ENCODE measurements at regions of chr19 and their contacts with region 1.

Region 1: DNA sequence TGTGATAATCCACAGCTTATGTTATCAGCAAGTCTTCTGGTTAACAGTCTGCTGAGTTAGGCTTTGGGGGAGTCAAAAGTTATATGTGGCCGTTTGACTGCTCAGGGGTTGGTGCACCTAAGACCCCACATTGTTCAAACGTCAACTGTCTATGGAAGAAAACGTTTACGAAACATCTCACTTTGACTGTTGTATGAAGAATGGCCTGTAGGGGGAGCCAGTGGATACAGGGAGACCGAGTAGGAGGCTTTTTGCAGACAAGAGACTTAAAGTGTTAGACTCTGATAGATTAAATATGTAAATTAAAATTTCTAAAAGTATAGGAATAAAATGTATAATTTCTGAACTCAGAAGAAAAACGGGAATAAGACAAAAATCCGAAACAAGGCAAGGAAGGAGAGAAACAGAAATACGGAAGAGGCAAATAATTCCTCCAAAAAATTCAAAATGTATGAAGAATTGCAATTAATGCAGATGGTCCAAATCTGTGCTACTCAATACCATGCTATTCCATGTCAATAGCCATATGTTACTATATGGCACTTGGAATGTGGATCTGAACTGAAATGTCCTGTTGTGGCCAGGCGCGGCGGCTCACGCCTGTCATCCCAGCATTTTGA is 37.8 kb downstream of the TNFSF14 start:
- DNase-seq: peak; percentile 84
- ATAC-seq: peak; percentile 82
- H3K4me3 ChIP-seq: no peak overlapping the region
- H3K27ac ChIP-seq: peak overlapping the region; percentile 53
- H3K4me1 ChIP-seq: peaks cover 12% of the 10 kb centered on the region
- H3K27me3 ChIP-seq: no peaks in the 10 kb centered on the region
- CTCF ChIP-seq: peak; percentile 77 to 85 (median 80)
- EP300 ChIP-seq: no peak
- POLR2A ChIP-seq: no peak
- RAD21 ChIP-seq: peak; percentile 86

Region 2: GRCh38 chr19:6481541-6482342 is 150.4 kb before region 1 on chr19 and contains the start of gene DENND1C:
- CTCF ChIA-PET with region 1: interaction called, 10 read pairs
- POLR2A ChIA-PET with region 1: no interaction called
- RAD21 ChIA-PET with region 1: interaction called, 3 read pairs
- SMC1A ChIA-PET with region 1: interaction called, 3 read pairs
- in situ Hi-C with region 1: no loop called
- intact Hi-C with region 1: no loop called
- DNase-seq: peak; percentile 45
- ATAC-seq: peak; percentile 95
- H3K4me3 ChIP-seq: peak within 1 kb of the TSS; percentile 69
- H3K27ac ChIP-seq: peak within 1 kb of the TSS; percentile 93
- H3K4me1 ChIP-seq: peaks cover 10% of the 10 kb centered on the region
- H3K27me3 ChIP-seq: no peaks in the 10 kb centered on the region
- CTCF ChIP-seq: peak; percentile 51 to 64 (median 61); a peak in 4 of 6 replicates
- EP300 ChIP-seq: no peak
- POLR2A ChIP-seq: peak; percentile 82
- RAD21 ChIP-seq: peak; percentile 53
- polyA plus RNA-seq, gene DENND1C: 2.4 to 2.8 TPM

Region 3: DNA sequence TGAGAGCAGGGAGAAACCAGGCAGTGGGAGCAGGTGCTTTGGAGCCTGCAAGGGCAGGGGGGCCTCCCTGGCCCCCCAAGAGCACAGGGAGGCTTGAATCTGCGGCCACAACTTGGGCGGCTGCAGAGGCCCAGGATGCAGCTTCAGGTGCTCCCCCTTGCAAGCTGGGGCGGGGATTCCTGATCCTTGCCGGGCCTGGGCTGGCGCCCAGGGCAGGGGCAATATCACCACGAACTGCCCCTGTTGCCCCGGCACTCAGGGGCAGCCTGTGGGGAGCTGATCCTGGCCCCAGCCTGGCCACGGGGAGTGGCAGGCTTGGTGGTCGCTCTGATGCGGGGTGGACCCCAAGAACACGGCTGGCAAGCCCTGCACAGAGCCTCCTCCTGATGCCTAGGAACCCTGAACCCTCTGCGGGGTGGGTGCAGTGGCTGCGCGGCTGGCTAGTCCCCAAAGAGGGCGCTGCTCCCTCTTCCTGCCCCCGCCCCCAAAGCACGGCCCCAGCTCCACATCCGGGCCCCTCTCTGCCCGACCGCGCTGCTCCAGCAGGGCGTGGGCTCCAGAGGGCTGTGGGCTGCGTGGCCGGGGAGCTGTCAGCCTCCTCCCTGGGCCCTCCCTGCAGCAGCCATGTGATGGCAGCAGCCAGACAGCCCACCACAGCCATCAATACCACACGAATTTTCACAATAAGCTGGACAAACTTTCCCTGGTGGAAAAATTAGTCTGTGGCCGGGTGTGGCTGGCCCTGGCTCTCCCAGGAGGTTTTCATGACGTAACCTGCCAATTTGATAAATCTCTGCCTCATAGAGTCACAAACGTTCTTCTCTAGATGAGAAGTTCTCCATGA is 80.3 kb before region 1 on chr19:
- CTCF ChIA-PET with region 1: interaction called, 11 read pairs
- POLR2A ChIA-PET with region 1: interaction called, 3 read pairs
- RAD21 ChIA-PET with region 1: interaction called, 4 read pairs
- SMC1A ChIA-PET with region 1: interaction called, 14 read pairs
- in situ Hi-C with region 1: no loop called
- intact Hi-C with region 1: no loop called
- DNase-seq: no peak
- ATAC-seq: peak; percentile 91
- H3K4me3 ChIP-seq: no peak overlapping the region; the same call in 1 of the 2 replicates
- H3K27ac ChIP-seq: peak overlapping the region; percentile 72
- H3K4me1 ChIP-seq: peaks cover 35% of the 10 kb centered on the region
- H3K27me3 ChIP-seq: no peaks in the 10 kb centered on the region
- CTCF ChIP-seq: peak; percentile 23 to 60 (median 47)
- EP300 ChIP-seq: peak; percentile 25 to 36; a peak in 1 of 4 replicates
- POLR2A ChIP-seq: peak; percentile 63
- RAD21 ChIP-seq: peak; percentile 40

Region 4: DNA sequence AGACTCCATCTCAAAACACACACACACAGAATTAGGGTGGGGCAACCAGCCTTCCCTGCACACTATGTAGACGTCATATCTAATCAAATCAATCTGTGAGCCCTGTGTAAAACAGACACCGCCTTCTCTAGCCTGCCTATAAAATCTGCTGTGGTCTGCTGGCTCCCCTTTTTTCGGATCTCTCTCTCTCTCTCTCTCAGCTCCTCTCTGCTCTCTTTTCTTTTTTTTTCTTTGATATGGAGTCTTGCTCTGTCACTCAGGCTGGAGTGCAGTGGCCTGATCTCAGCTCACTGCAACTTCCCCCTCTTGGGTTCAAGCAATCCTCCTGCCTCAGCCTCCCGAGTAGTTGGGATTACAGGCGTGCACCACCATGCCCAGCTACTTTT is 29.4 kb before region 1 on chr19:
- CTCF ChIA-PET with region 1: interaction called, 8 read pairs
- POLR2A ChIA-PET with region 1: interaction called, 4 read pairs
- RAD21 ChIA-PET with region 1: interaction called, 25 read pairs
- SMC1A ChIA-PET with region 1: interaction called, 20 read pairs
- in situ Hi-C with region 1: no loop called
- intact Hi-C with region 1: loop called (anchors 1 kb)
- DNase-seq: no peak
- ATAC-seq: peak; percentile 14
- H3K4me3 ChIP-seq: peak overlapping the region; percentile 76; the same call in 1 of the 2 replicates
- H3K27ac ChIP-seq: peak overlapping the region; percentile 95
- H3K4me1 ChIP-seq: peaks cover 27% of the 10 kb centered on the region
- H3K27me3 ChIP-seq: no peaks in the 10 kb centered on the region
- CTCF ChIP-seq: no peak
- EP300 ChIP-seq: no peak
- POLR2A ChIP-seq: no peak
- RAD21 ChIP-seq: no peak

Region 5: DNA sequence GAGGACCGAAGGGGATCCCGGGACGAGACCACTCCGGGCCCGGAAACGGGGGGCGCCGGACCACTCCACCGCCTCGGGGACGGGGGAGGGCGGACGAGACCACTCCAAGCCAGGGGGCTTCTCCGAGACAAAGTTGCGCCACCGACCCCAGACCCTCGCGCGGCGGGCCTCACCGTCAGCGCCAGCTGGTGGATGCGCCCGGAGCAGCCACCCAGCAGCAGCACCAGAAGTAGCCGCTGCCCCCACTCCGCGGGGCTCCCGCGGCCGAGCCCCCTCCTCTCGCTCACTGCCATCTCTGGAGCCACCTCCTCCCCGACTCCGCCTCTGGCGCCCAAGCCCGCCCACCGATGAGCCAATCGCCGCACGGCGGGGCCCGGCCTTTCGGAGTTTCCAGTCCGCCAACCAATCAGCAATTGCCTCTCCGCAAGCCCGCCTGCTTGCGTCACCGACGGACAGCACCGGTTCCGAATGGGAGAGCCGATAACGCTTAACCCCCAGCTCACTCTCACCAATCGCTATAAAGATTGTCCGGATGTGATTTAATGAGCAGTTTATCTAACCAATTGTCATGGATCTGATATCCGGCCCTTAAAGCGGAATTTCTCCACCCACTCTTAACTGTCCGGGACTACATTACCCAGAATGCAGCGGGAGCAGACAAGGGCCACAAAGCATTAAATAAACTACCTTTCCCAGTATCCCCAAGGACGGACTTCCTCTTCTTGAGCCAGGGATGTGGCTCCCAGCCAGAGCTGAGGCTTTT is 105.4 kb after region 1 on chr19 and contains the start of gene GPR108:
- CTCF ChIA-PET with region 1: interaction called, 46 read pairs
- POLR2A ChIA-PET with region 1: interaction called, 3 read pairs
- RAD21 ChIA-PET with region 1: interaction called, 43 read pairs
- SMC1A ChIA-PET with region 1: interaction called, 25 read pairs
- in situ Hi-C with region 1: no loop called
- intact Hi-C with region 1: loop called (anchors 1 kb)
- DNase-seq: peak; percentile 100
- ATAC-seq: peak; percentile 82
- H3K4me3 ChIP-seq: peak within 1 kb of the TSS; percentile 100
- H3K27ac ChIP-seq: peak within 1 kb of the TSS; percentile 92
- H3K4me1 ChIP-seq: peaks cover 30% of the 10 kb centered on the region
- H3K27me3 ChIP-seq: no peaks in the 10 kb centered on the region
- CTCF ChIP-seq: no peak
- EP300 ChIP-seq: no peak
- POLR2A ChIP-seq: peak; percentile 66
- RAD21 ChIP-seq: no peak
- polyA plus RNA-seq, gene GPR108: 4.4 to 17.6 TPM

Region 6: GRCh38 chr19:6837525-6837924 is 205.4 kb after region 1 on chr19:
- CTCF ChIA-PET with region 1: no interaction called
- POLR2A ChIA-PET with region 1: no interaction called
- RAD21 ChIA-PET with region 1: no interaction called
- SMC1A ChIA-PET with region 1: no interaction called
- in situ Hi-C with region 1: no loop called
- intact Hi-C with region 1: no loop called
- DNase-seq: no peak
- ATAC-seq: no peak
- H3K4me3 ChIP-seq: no peak overlapping the region
- H3K27ac ChIP-seq: no peak overlapping the region
- H3K4me1 ChIP-seq: no peaks in the 10 kb centered on the region
- H3K27me3 ChIP-seq: no peaks in the 10 kb centered on the region
- CTCF ChIP-seq: no peak
- EP300 ChIP-seq: no peak
- POLR2A ChIP-seq: no peak
- RAD21 ChIP-seq: no peak

Region 7: DNA sequence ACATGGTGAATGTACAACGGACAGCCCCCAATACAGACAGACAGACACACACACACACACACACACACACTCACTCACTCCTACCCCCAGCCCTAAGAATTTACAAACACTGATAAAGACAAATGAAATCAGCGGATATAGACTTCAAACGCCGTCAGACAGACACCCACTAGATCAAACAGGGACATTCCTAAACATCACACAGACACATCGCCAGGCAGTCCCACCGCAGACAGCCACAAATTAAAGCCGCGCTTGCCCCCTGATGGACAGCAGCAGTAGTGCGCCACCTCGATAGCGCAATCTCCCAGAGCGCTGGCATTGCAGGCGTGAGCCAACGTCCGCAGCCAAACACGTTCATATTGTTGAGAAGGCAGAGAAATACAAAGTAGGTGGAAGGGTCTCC is 230.6 kb after region 1 on chr19:
- CTCF ChIA-PET with region 1: interaction called, 41 read pairs
- POLR2A ChIA-PET with region 1: no interaction called
- RAD21 ChIA-PET with region 1: interaction called, 24 read pairs
- SMC1A ChIA-PET with region 1: interaction called, 21 read pairs
- in situ Hi-C with region 1: loop called (anchors 5 kb)
- intact Hi-C with region 1: loop called (anchors 1 kb)
- DNase-seq: peak; percentile 80
- ATAC-seq: peak; percentile 94
- H3K4me3 ChIP-seq: peak overlapping the region; percentile 67; the same call in 1 of the 2 replicates
- H3K27ac ChIP-seq: peak overlapping the region; percentile 56; the same call in 1 of the 2 replicates
- H3K4me1 ChIP-seq: peaks cover 11% of the 10 kb centered on the region
- H3K27me3 ChIP-seq: no peaks in the 10 kb centered on the region
- CTCF ChIP-seq: peak; percentile 92 to 99 (median 99); a peak in 5 of 6 replicates
- EP300 ChIP-seq: no peak
- POLR2A ChIP-seq: peak; percentile 65
- RAD21 ChIP-seq: peak; percentile 88

Region 8: GRCh38 chr19:6925801-6926751 is 294.0 kb after region 1 on chr19:
- CTCF ChIA-PET with region 1: no interaction called
- POLR2A ChIA-PET with region 1: no interaction called
- RAD21 ChIA-PET with region 1: no interaction called
- SMC1A ChIA-PET with region 1: no interaction called
- in situ Hi-C with region 1: no loop called
- intact Hi-C with region 1: no loop called
- DNase-seq: peak; percentile 68
- ATAC-seq: peak; percentile 97
- H3K4me3 ChIP-seq: peak overlapping the region; percentile 52
- H3K27ac ChIP-seq: peak overlapping the region; percentile 42
- H3K4me1 ChIP-seq: peaks cover 4% of the 10 kb centered on the region
- H3K27me3 ChIP-seq: no peaks in the 10 kb centered on the region
- CTCF ChIP-seq: peak; percentile 44 to 52 (median 51)
- EP300 ChIP-seq: no peak
- POLR2A ChIP-seq: no peak
- RAD21 ChIP-seq: peak; percentile 41

Region 9: GRCh38 chr19:7088999-7089398 is 456.9 kb after region 1 on chr19:
- CTCF ChIA-PET with region 1: no interaction called
- POLR2A ChIA-PET with region 1: no interaction called
- RAD21 ChIA-PET with region 1: no interaction called
- SMC1A ChIA-PET with region 1: no interaction called
- in situ Hi-C with region 1: no loop called
- intact Hi-C with region 1: no loop called
- DNase-seq: no peak
- ATAC-seq: no peak
- H3K4me3 ChIP-seq: no peak overlapping the region
- H3K27ac ChIP-seq: no peak overlapping the region
- H3K4me1 ChIP-seq: no peaks in the 10 kb centered on the region
- H3K27me3 ChIP-seq: no peaks in the 10 kb centered on the region
- CTCF ChIP-seq: no peak
- EP300 ChIP-seq: no peak
- POLR2A ChIP-seq: no peak
- RAD21 ChIP-seq: no peak